CD4-positive, alpha-beta memory T cell (primary cell): ENCODE measurements at regions of chr13 and their contacts with region 1.

Region 1: DNA sequence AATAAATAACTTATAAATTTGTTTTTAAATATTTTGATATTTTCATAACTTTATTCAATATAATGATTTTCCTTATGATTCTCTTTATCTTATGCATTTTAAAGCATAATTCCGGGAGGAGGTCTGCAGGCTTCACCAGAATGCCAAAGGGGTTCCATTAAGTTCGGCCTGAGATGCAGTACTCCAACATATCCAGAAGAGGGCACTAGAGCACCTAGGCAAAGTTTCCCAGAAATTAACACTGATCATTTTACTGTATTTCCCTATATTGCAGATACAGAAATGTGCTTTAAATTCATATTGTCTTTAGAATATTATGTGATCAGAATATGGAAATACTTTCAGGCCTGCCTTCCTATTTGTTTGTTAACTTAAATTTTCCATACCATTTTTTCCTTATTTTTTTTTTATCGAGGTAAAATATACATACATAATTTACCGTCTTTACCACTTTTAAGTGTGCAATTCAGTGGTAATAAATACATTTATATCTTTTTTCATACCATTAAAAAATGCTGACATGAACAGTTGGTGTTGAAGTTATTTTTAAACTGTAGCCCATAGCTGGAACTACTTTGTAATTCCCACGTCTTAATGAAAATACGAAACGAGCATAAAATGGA is 58.9 kb upstream of the TM9SF2 start:
- DNase-seq: peak; percentile 66 to 74 (median 71)
- H3K4me3 ChIP-seq: no peak overlapping the region
- H3K4me3 Mint-ChIP-seq: no peak overlapping the region
- H3K27ac ChIP-seq: no peak overlapping the region
- H3K27ac Mint-ChIP-seq: peak overlapping the region in 1 of 7 donors; percentile 9
- H3K4me1 ChIP-seq: peaks cover 3% of the 10 kb centered on the region
- H3K4me1 Mint-ChIP-seq: peaks cover 4 to 10% (median 6%) of the 10 kb centered on the region in 4 donors
- H3K27me3 ChIP-seq: no peaks in the 10 kb centered on the region
- H3K27me3 Mint-ChIP-seq: peaks cover 1 to 3% of the 10 kb centered on the region in 2 donors

Region 2: GRCh38 chr13:99614385-99614885 is 172.1 kb after region 1 on chr13:
- CTCF ChIA-PET with region 1: interaction called, 11 read pairs
- POLR2A ChIA-PET with region 1: no interaction called
- intact Hi-C with region 1: loop called (anchors 1 kb)
- DNase-seq: peak in 3 of 5 donors; percentile 13 to 23 (median 16)
- H3K4me3 ChIP-seq: no peak overlapping the region
- H3K4me3 Mint-ChIP-seq: no peak overlapping the region
- H3K27ac ChIP-seq: no peak overlapping the region
- H3K27ac Mint-ChIP-seq: no peak overlapping the region
- H3K4me1 ChIP-seq: peaks cover 13% of the 10 kb centered on the region
- H3K4me1 Mint-ChIP-seq: peaks cover 22 to 48% (median 33%) of the 10 kb centered on the region in 4 donors
- H3K27me3 ChIP-seq: no peaks in the 10 kb centered on the region
- H3K27me3 Mint-ChIP-seq: no peaks in the 10 kb centered on the region

Region 3: DNA sequence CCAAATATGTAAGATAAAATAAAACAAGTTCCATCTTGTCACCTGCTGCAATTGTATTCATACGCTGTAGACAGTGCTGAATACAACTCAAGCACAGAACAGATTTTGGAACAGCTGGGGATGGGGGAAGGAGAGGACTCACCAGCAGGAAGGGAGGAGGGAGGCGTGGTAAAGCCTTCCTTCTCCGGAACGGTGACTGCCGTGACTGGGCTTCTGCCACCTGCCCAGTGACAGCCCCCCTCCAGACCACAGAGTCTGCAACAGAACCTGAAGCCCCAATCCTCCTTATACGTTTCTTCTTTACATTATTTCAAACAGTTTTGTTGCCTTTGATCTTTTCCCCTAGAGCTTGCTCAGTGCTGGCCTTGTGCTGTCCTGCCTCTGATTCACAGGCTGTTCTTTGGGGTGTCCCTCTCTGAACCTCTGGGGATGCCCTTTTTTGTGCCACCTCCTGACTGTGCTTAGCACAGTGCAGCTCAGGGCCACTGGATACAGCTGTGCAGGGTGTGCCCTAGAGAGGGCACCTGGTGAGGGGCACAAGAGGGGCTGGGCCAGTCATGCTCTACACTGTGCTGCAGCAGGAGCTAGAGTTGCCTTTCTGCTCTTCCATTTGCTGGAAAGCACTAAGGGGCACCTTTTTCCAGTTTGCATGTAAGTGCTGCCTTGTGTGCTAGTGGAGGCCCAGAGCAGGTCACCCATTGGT is 316.2 kb after region 1 on chr13:
- CTCF ChIA-PET with region 1: no interaction called
- POLR2A ChIA-PET with region 1: no interaction called
- intact Hi-C with region 1: no loop called
- DNase-seq: no peak
- H3K4me3 ChIP-seq: no peak overlapping the region
- H3K4me3 Mint-ChIP-seq: no peak overlapping the region
- H3K27ac ChIP-seq: no peak overlapping the region
- H3K27ac Mint-ChIP-seq: peak overlapping the region in 2 of 7 donors; percentile 32 to 67
- H3K4me1 ChIP-seq: no peaks in the 10 kb centered on the region
- H3K4me1 Mint-ChIP-seq: peaks cover 0 to 4% (median under 1%) of the 10 kb centered on the region in 4 donors
- H3K27me3 ChIP-seq: no peaks in the 10 kb centered on the region
- H3K27me3 Mint-ChIP-seq: no peaks in the 10 kb centered on the region

Region 4: GRCh38 chr13:100542826-100543156 is 1100.4 kb after region 1 on chr13:
- CTCF ChIA-PET with region 1: no interaction called
- POLR2A ChIA-PET with region 1: no interaction called
- intact Hi-C with region 1: loop called (anchors 1 kb)
- DNase-seq: peak in 4 of 5 donors; percentile 33 to 40 (median 36)
- H3K4me3 ChIP-seq: peak overlapping the region in 1 of 2 donors; percentile 11
- H3K4me3 Mint-ChIP-seq: peak overlapping the region in 6 of 8 donors; percentile 33 to 78 (median 52)
- H3K27ac ChIP-seq: no peak overlapping the region
- H3K27ac Mint-ChIP-seq: peak overlapping the region in 2 of 7 donors; percentile 49 to 59
- H3K4me1 ChIP-seq: peaks cover 22% of the 10 kb centered on the region
- H3K4me1 Mint-ChIP-seq: peaks cover 3 to 37% (median 24%) of the 10 kb centered on the region in 4 donors
- H3K27me3 ChIP-seq: no peaks in the 10 kb centered on the region
- H3K27me3 Mint-ChIP-seq: no peaks in the 10 kb centered on the region

Region 5: DNA sequence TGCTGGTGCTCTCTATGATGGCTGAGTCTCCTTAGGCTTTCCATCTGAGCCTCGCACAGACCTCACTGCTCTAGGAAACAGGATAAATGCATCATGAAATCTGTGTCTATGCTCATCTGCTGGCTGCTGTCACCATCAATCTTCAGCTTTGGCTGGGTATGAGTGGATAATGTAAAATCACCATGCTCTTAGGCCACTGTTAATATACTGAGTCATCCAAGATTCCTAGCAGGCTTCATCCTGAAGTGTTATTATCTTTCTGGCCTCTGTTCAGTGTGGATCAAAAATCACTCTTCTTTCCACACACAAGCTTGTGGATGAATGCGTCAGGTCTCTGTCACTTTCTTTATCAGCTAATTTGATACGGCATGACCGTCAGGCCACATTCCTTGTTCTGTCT is 1656.5 kb after region 1 on chr13:
- CTCF ChIA-PET with region 1: no interaction called
- POLR2A ChIA-PET with region 1: no interaction called
- intact Hi-C with region 1: loop called (anchors 5 kb)
- DNase-seq: no peak
- H3K4me3 ChIP-seq: no peak overlapping the region
- H3K4me3 Mint-ChIP-seq: no peak overlapping the region
- H3K27ac ChIP-seq: no peak overlapping the region
- H3K27ac Mint-ChIP-seq: no peak overlapping the region
- H3K4me1 ChIP-seq: no peaks in the 10 kb centered on the region
- H3K4me1 Mint-ChIP-seq: no peaks in the 10 kb centered on the region
- H3K27me3 ChIP-seq: no peaks in the 10 kb centered on the region
- H3K27me3 Mint-ChIP-seq: peaks cover 10 to 15% of the 10 kb centered on the region in 2 donors